Activated CD4-positive, alpha-beta memory T cell treated with anti-CD3 and anti-CD28 coated beads, Interleukin-2, amount 10 ng/mL, durations not matched to agents 7 days and 5 days (primary cell): ENCODE measurements at regions of chr9 and their contacts with region 1.

Region 1: DNA sequence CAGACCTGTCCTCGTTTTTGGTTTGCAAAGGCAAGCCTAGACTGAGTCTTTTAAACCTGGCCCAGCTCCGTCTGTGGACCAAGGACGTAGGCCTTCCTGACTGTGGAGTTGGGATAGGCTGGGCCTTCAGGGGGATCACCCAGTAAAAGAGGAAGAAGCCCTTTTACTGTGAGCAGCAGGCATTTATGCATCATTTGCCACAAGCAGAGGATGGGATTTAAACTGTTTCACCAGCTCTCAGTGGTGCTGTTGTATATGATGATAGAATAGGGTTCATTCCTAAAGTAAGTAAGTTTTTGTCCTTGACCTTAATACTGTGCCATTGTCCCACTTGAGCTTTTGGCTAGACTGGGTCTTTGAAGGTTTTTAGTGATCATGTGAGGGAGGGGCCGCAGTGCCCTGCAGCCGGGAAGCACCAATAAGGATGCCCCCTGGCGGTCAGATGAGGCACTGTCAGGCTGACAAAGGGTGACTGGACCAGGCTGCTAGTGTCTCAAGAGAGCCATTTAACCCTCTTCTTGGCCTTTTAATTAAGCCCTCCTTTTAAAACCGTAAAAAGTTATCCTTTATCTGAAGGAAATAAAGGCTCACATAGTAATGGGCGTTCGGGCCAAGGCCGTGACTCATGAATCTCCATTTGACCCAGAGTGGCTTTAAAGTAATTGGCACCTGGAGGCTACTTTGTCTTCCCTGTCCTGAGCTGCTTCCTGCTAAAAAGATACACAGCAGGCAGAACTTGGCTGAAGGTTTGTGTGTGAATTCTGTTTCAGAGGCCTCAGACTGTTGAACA is 74.0 kb downstream of the UBAP1 start:
- DNase-seq: peak; percentile 68
- H3K4me3 Mint-ChIP-seq: no peak overlapping the region
- H3K27ac Mint-ChIP-seq: no peak overlapping the region
- H3K4me1 Mint-ChIP-seq: no peaks in the 10 kb centered on the region
- H3K27me3 Mint-ChIP-seq: no peaks in the 10 kb centered on the region

Region 2: DNA sequence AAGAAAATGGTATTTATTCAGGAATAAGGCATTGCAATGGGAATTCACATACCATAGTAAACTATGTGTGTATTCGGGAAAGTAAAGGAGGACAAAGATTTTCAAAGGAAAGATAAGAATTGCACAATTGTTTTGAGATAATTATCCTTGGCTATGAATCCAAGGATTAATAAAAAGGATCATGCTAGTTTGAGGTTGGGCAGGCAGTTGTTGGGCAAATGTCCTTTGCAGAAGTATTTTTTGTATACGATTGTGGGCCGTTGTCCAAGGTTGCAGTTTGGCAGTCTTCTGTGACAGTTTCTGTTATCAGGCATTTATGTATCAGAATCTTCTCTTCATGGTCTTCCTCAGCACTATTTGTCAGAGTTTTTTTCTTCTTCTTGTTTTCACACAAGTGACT is 193.6 kb before region 1 on chr9:
- CTCF ChIA-PET with region 1: no interaction called
- POLR2A ChIA-PET with region 1: no interaction called
- DNase-seq: no peak
- H3K4me3 Mint-ChIP-seq: no peak overlapping the region
- H3K27ac Mint-ChIP-seq: no peak overlapping the region
- H3K4me1 Mint-ChIP-seq: no peaks in the 10 kb centered on the region
- H3K27me3 Mint-ChIP-seq: peaks cover 7% of the 10 kb centered on the region

Region 3: GRCh38 chr9:34133436-34133949 is 119.4 kb before region 1 on chr9:
- CTCF ChIA-PET with region 1: no interaction called
- POLR2A ChIA-PET with region 1: no interaction called
- DNase-seq: no peak
- H3K4me3 Mint-ChIP-seq: no peak overlapping the region
- H3K27ac Mint-ChIP-seq: no peak overlapping the region
- H3K4me1 Mint-ChIP-seq: no peaks in the 10 kb centered on the region
- H3K27me3 Mint-ChIP-seq: no peaks in the 10 kb centered on the region

Region 4: DNA sequence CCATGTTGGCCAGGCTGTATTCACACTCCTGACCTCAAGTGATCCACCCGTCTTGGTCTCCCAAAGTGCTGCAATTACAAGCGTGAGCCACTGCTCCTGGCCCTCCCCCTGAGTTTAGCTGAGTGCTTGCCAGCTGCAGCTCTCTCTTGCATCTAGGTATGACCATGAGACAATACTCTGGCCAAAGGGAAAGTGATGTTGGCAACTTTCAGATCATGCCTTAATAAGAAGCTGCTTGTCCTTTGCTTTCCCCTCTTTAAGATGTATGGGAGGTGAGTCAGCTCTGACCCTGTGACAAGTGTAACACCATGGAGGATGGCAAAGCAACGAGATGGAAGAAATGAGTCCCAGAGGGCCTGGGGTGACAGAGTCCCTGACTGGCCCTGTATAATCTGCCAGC is 107.7 kb before region 1 on chr9:
- CTCF ChIA-PET with region 1: no interaction called
- POLR2A ChIA-PET with region 1: no interaction called
- DNase-seq: no peak
- H3K4me3 Mint-ChIP-seq: no peak overlapping the region
- H3K27ac Mint-ChIP-seq: no peak overlapping the region
- H3K4me1 Mint-ChIP-seq: no peaks in the 10 kb centered on the region
- H3K27me3 Mint-ChIP-seq: peaks cover 9% of the 10 kb centered on the region

Region 5: DNA sequence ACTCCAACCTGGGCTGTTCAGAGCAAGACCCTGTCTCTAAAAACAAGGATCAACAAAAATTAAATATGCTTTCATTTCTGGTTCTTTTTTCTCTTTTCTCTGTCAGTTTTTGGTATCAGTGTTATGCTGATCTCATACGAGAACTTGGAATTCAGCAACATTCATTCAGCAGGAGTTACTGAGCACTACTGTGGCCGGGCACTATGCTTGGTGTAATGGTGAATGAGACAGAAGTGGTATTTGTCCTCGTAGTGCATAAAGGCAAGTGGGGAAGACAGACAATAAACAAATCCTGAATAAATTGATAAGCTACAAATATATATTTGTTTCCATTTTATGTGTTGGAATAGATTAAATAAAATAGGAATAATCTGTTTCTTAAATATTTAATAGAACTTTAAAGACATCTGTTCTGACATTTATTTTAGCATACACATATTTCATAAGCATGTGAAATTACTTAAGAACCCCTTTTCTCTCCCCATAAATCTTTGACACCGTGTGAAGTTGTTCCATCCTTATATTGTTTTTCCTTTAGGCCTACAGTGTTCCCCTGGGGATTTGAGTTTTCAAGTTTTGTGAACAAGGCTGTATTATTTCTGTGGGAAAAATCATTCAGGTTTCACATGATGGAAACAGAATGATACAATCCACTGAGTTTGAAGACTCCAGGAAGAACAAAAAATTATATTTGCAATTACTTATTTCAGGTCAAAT is 49.4 kb before region 1 on chr9:
- CTCF ChIA-PET with region 1: interaction called, 11 read pairs
- POLR2A ChIA-PET with region 1: no interaction called
- DNase-seq: no peak
- H3K4me3 Mint-ChIP-seq: no peak overlapping the region
- H3K27ac Mint-ChIP-seq: no peak overlapping the region
- H3K4me1 Mint-ChIP-seq: peaks cover 36% of the 10 kb centered on the region
- H3K27me3 Mint-ChIP-seq: no peaks in the 10 kb centered on the region

Region 6: GRCh38 chr9:34262939-34263338 is 10.1 kb after region 1 on chr9:
- CTCF ChIA-PET with region 1: interaction called, 30 read pairs
- POLR2A ChIA-PET with region 1: no interaction called
- DNase-seq: no peak
- H3K4me3 Mint-ChIP-seq: no peak overlapping the region
- H3K27ac Mint-ChIP-seq: no peak overlapping the region
- H3K4me1 Mint-ChIP-seq: peaks cover 9% of the 10 kb centered on the region
- H3K27me3 Mint-ChIP-seq: no peaks in the 10 kb centered on the region

Region 7: GRCh38 chr9:34279411-34279810 is 26.5 kb after region 1 on chr9:
- CTCF ChIA-PET with region 1: no interaction called
- POLR2A ChIA-PET with region 1: no interaction called
- DNase-seq: no peak
- H3K4me3 Mint-ChIP-seq: no peak overlapping the region
- H3K27ac Mint-ChIP-seq: no peak overlapping the region
- H3K4me1 Mint-ChIP-seq: peaks cover 6% of the 10 kb centered on the region
- H3K27me3 Mint-ChIP-seq: no peaks in the 10 kb centered on the region